Activated naive CD4-positive, alpha-beta T cell treated with anti-CD3 and anti-CD28 coated beads for 36 hours (primary cell): ENCODE measurements at regions of chr11 and their contacts with region 1.

Region 1: DNA sequence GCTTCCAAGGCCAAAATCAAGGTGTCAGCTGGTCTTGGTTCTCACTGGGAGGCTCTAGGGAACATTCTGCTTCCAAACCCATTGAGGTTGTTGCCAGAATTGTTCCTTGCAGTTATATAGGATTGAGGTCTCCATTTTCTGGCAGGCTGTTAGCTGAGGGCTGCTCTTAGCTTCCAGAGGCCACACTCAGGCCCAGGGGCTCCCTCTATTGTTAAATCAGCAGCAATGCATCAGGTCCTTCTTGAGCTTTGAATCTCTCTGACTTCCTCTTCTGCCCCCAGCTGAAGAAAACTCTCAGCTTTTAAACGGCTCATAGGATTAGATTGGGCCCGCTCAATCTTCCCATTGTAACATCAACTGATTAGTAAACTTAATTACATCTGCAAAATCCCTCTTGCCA is 39.3 kb upstream of the BSX start:
- DNase-seq: peak; percentile 47
- H3K4me3 Mint-ChIP-seq: no peak overlapping the region
- H3K27ac Mint-ChIP-seq: no peak overlapping the region
- H3K4me1 Mint-ChIP-seq: peaks cover 6% of the 10 kb centered on the region
- H3K27me3 Mint-ChIP-seq: no peaks in the 10 kb centered on the region

Region 2: DNA sequence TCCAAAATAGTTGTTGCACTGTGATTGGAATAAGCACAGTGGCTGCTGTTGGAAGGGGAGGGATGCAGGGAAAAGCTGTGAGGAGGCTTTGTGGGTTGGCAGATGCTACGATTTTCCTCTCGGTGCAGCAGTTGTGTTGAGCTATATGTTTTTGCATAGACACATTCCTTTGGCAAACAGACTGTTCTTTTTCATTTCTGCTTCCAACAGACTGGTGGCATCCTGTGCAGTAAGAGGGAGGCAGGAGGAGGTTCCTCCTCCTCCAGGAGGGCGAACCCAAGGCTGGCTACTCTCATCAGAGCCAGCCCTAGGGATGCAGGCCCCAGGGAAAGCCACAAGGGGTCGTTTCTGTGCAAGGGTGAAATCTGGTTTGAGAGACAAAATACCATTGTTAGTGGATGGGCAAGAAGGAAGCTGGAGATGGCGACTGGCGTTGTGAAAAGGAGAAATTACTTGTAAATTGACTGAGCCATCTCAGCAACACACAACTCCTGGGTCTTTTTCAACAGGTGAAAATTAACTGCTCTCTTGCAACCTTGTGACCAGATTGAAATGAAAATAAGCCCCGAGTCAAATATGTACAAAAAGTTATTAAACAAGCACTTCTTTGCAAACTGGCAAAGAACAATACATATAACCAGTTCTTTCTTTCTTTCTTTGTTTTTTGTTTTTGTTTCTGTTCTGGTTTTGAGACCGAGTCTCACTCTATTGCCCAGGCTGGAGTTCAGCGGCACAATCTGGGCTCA is 392.0 kb before region 1 on chr11:
- CTCF ChIA-PET with region 1: interaction called, 3 read pairs
- intact Hi-C with region 1: loop called (anchors 5 kb)
- DNase-seq: peak; percentile 79
- H3K4me3 Mint-ChIP-seq: no peak overlapping the region
- H3K27ac Mint-ChIP-seq: no peak overlapping the region
- H3K4me1 Mint-ChIP-seq: peaks cover 13% of the 10 kb centered on the region
- H3K27me3 Mint-ChIP-seq: no peaks in the 10 kb centered on the region

Region 3: DNA sequence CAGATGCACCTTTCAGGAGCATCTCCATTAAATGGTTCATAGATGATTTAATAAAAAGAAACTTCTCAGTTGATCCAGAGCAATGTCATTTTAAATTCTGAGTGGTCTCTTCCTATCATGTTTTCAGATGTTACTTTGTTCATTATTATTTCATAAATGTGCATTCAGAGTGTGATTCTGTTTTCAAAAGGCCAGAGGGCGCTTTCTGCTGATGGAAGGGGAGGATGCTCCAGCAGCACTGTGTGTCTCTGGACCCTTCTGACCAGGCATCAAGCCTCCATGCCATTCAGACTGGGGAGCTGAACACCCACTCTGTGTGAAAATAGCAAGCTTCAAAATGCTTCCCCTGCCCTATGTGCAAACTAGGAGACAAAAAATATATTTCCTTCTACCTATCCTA is 206.6 kb before region 1 on chr11:
- CTCF ChIA-PET with region 1: no interaction called
- intact Hi-C with region 1: loop called (anchors 1 kb)
- DNase-seq: peak; percentile 26
- H3K4me3 Mint-ChIP-seq: no peak overlapping the region
- H3K27ac Mint-ChIP-seq: no peak overlapping the region
- H3K4me1 Mint-ChIP-seq: peaks cover 19% of the 10 kb centered on the region
- H3K27me3 Mint-ChIP-seq: no peaks in the 10 kb centered on the region

Region 4: GRCh38 chr11:122882857-122883645 is 137.9 kb before region 1 on chr11:
- CTCF ChIA-PET with region 1: interaction called, 6 read pairs
- intact Hi-C with region 1: loop called (anchors 5 kb)
- DNase-seq: peak; percentile 63
- H3K4me3 Mint-ChIP-seq: peak overlapping the region; percentile 78
- H3K27ac Mint-ChIP-seq: no peak overlapping the region
- H3K4me1 Mint-ChIP-seq: peaks cover 19% of the 10 kb centered on the region
- H3K27me3 Mint-ChIP-seq: peaks cover 1% of the 10 kb centered on the region

Region 5: GRCh38 chr11:122920579-122920978 is 100.4 kb before region 1 on chr11:
- CTCF ChIA-PET with region 1: interaction called, 22 read pairs
- intact Hi-C with region 1: no loop called
- DNase-seq: no peak
- H3K4me3 Mint-ChIP-seq: no peak overlapping the region
- H3K27ac Mint-ChIP-seq: no peak overlapping the region
- H3K4me1 Mint-ChIP-seq: no peaks in the 10 kb centered on the region
- H3K27me3 Mint-ChIP-seq: no peaks in the 10 kb centered on the region

Region 6: GRCh38 chr11:123166071-123166559 is 145.1 kb after region 1 on chr11:
- CTCF ChIA-PET with region 1: no interaction called
- intact Hi-C with region 1: no loop called
- DNase-seq: peak; percentile 46
- H3K4me3 Mint-ChIP-seq: no peak overlapping the region
- H3K27ac Mint-ChIP-seq: no peak overlapping the region
- H3K4me1 Mint-ChIP-seq: no peaks in the 10 kb centered on the region
- H3K27me3 Mint-ChIP-seq: no peaks in the 10 kb centered on the region